ENCODE measurements at regions of chr9 and their contacts with region 1.

Region 1: GRCh38 chr9:134641173-134641985 is at the start of gene COL5A1:
- DNase-seq: peak; percentile 86
- H3K4me3 ChIP-seq: peak within 1 kb of the TSS in 2 of 3 experiments; percentile 30 to 32
- H3K27ac ChIP-seq: no peak within 1 kb of the TSS
- H3K4me1 ChIP-seq: peaks cover 5% of the 10 kb centered on the region
- H3K27me3 ChIP-seq: peaks cover 4% of the 10 kb centered on the region
- CTCF ChIP-seq: no peak
- total RNA-seq, gene COL5A1: 7.2 to 22.8 TPM

Region 2: DNA sequence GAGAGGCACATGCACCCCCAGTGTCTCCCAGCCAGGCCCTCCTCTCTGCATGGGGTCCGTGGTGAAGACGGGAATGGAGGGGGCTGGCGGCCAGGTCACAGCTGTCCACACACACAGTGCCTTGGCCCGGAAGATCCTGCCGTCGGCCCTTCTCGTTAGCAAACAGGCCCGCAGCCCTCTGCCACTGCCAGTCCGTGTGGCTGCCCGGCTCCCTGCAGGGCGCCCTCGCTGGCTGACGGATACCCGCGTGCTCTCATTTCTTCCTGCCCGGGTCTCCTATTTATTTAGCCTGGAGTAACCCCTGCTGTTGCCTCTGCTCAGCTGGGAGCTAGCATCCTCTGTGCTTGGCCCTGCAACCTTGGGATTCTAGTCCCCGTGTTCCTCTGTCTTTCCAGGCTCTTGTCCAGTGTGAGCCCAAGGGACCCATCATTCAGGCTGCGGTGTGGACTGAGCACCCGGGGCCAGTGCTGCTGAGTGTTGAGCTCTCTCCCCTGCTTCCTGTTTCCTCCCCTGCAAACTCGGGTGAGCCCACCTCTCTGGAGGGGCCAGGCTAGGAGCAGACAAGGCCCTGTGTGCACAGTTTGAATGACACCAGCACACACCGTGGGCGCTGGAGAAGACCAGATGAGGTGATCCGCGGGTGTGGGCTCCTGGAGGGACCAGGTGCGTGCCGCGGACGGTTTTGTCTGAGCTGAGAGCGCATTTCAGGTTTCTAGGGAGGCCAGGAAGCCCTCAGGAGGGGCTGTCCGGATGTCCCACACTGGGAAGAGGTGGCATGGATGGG is 462.4 kb before region 1 on chr9:
- CTCF ChIA-PET with region 1: no interaction called
- dilution Hi-C with region 1: no loop called
- in situ Hi-C with region 1: no loop called
- intact Hi-C with region 1: loop called (anchors 10 kb)
- DNase-seq: no peak
- H3K4me3 ChIP-seq: no peak overlapping the region
- H3K27ac ChIP-seq: no peak overlapping the region
- H3K4me1 ChIP-seq: no peaks in the 10 kb centered on the region
- H3K27me3 ChIP-seq: no peaks in the 10 kb centered on the region
- CTCF ChIP-seq: no peak

Region 3: GRCh38 chr9:134624827-134625181 is 16.6 kb before region 1 on chr9:
- CTCF ChIA-PET with region 1: no interaction called
- dilution Hi-C with region 1: no loop called
- in situ Hi-C with region 1: no loop called
- intact Hi-C with region 1: loop called (anchors 2 kb)
- DNase-seq: peak; percentile 77
- H3K4me3 ChIP-seq: no peak overlapping the region
- H3K27ac ChIP-seq: no peak overlapping the region
- H3K4me1 ChIP-seq: peaks cover 6% of the 10 kb centered on the region
- H3K27me3 ChIP-seq: no peaks in the 10 kb centered on the region
- CTCF ChIP-seq: no peak

Region 4: GRCh38 chr9:134707031-134707680 is 65.8 kb after region 1 on chr9:
- CTCF ChIA-PET with region 1: no interaction called
- dilution Hi-C with region 1: loop called (anchors 10 kb)
- in situ Hi-C with region 1: no loop called
- intact Hi-C with region 1: no loop called
- DNase-seq: no peak
- H3K4me3 ChIP-seq: no peak overlapping the region
- H3K27ac ChIP-seq: no peak overlapping the region
- H3K4me1 ChIP-seq: no peaks in the 10 kb centered on the region
- H3K27me3 ChIP-seq: no peaks in the 10 kb centered on the region
- CTCF ChIP-seq: no peak

Region 5: DNA sequence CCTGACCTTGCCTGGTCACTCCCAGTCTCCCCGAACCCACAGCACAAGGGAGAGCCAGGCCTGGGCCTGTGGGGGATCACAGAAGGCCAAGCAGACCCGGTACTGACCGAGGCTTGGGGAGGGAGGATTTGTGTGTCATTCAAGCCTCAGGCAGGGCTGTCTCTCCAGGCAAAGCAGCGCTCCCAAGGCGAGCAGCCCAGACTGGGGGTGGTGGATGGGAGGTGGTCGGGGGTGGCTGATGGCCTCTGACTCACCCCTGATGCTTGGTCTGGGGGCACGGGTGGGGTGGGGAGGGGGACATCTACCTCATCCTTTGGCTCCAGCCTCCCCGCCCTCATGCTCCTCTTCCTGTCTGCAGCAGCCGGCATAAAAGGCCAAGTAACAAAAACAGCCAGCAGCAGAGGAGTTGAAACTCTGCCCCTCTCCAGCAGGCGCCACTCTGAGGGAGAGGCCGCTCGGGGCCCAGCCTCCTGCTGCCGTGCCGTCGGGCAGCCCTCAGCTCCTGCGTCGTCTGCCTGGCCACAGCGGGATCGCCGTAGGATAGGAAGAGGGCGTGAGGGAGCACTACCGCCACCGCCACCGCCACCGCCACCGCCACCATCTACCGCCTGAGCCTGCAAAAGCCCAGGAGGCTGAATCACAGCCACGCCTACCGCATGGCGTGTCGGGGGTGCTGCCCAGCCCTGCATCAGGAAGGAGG is 612.1 kb after region 1 on chr9:
- CTCF ChIA-PET with region 1: no interaction called
- dilution Hi-C with region 1: no loop called
- in situ Hi-C with region 1: no loop called
- intact Hi-C with region 1: no loop called
- DNase-seq: no peak
- H3K4me3 ChIP-seq: no peak overlapping the region
- H3K27ac ChIP-seq: no peak overlapping the region
- H3K4me1 ChIP-seq: no peaks in the 10 kb centered on the region
- H3K27me3 ChIP-seq: no peaks in the 10 kb centered on the region
- CTCF ChIP-seq: no peak

Measured in mammary epithelial cell (primary cell).